Heart left ventricle (tissue), 16 donors: ENCODE measurements at regions of chr3 and their contacts with region 1.

Region 1: GRCh38 chr3:4350789-4351163 is 47.6 kb downstream of the SETMAR start:
- DNase-seq: peak in 3 of 5 donors; percentile 33 to 48 (median 45)
- ATAC-seq: peak; percentile 55 to 90 (median 84)
- H3K4me3 ChIP-seq: peak overlapping the region in 9 of 12 donors; percentile 19 to 55 (median 45)
- H3K27ac ChIP-seq: peak overlapping the region in 10 of 12 donors; percentile 2 to 76 (median 60)
- H3K4me1 ChIP-seq: peaks cover 0 to 20% (median 8%) of the 10 kb centered on the region in 12 donors
- H3K27me3 ChIP-seq: no peaks in the 10 kb centered on the region
- CTCF ChIP-seq: peak; percentile 62 to 88 (median 78)
- POLR2A ChIP-seq: no peak

Region 2: GRCh38 chr3:4493014-4493940 is 142.5 kb after region 1 on chr3 and contains the start of gene ITPR1:
- intact Hi-C with region 1: loop called in 3 of 10 experiments (anchors 10 kb)
- DNase-seq: peak; percentile 98 to 99 (median 99)
- ATAC-seq: peak; percentile 98 to 99 (median 99)
- H3K4me3 ChIP-seq: peak within 1 kb of the TSS; percentile 59 to 96 (median 78)
- H3K27ac ChIP-seq: peak within 1 kb of the TSS; percentile 68 to 97 (median 87)
- H3K4me1 ChIP-seq: peaks cover 0 to 50% (median 26%) of the 10 kb centered on the region in 12 donors
- H3K27me3 ChIP-seq: no peaks in the 10 kb centered on the region
- CTCF ChIP-seq: no peak
- POLR2A ChIP-seq: peak; percentile 90 to 99
- total RNA-seq, gene ITPR1: 16.5 to 55.8 (median 20.1) TPM

Region 3: DNA sequence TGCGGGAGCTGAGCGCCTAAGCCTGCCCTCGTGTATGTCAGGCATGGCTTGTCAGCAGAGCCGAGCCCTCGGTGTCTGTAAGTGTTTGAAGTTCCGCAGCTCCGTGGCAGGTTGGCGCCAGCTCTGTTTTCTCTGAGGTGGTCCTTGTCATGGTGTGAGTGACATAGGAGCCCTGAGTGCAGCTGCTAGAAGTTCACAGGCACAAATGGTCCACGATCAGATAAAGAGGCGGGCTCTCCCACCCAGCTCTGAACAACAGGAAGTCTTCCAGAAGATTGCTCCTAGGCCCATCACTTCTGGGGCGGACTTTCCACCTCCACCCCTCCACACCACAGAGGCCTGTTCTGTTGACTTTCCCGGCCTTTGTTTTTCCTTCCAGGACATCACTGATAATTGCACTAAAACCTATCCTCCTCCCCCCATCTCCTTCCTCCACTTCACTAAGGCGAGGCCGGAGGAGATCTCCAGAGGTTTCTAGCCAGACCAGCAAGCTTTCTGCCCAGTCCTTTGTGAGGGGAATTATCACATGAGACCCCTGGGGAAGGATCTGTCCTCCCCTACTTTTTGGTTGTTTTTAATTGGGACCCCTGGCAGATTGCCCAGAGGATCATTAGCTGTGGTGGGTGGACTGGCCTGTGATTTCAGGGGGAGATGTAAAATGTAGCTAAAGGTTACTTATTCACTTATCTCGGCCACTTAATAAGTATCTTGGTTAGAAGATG is 162.3 kb after region 1 on chr3:
- intact Hi-C with region 1: loop called in 1 of 10 experiments (anchors 10 kb)
- DNase-seq: peak in 3 of 5 donors; percentile 33 to 61 (median 40)
- ATAC-seq: peak; percentile 49 to 75 (median 67)
- H3K4me3 ChIP-seq: no peak overlapping the region
- H3K27ac ChIP-seq: peak overlapping the region in 9 of 12 donors; percentile 18 to 54 (median 39)
- H3K4me1 ChIP-seq: peaks cover 0 to 66% (median 32%) of the 10 kb centered on the region in 12 donors
- H3K27me3 ChIP-seq: no peaks in the 10 kb centered on the region
- CTCF ChIP-seq: no peak
- POLR2A ChIP-seq: no peak

Region 4: DNA sequence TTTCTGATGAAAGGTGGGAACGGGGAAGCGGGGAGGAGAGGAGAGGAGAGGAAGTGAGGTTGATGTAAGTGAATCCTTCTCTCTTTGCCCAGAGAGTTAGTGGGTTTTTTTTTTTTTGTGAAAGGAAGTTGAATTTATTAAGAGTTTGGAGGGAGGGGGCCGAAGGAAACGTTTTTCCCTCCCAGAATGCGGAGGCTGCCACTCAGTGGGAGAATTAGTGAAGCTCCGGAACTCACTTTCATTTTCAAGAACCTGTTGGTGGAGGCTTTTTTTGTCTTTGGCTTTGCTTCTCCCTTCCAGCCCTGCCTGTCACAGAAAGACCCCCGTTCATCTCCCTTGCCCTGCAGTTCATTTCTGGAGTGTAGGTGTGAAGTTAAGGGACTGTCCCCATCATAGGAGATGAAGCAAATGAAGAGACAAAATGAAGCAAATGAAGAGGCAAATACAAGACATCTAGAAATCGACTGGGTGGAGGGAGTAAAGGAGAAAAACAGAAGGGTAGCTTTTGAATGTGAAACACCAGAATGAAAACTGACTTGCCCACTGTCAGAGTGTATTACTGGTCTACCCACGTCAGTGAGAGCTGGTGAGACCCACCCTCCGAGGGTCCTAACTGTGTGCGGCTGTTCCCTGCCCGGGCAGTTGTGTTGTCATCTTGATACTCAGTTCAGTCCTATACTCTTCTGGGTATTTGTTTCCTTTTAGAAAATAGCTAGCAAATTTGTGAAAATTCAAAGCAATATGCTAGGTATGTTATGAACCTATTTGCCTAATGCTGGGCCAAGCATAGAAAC is 233.9 kb after region 1 on chr3:
- intact Hi-C with region 1: loop called in 4 of 10 experiments (anchors 2 to 5 kb)
- DNase-seq: peak in 3 of 5 donors; percentile 31 to 49 (median 46)
- ATAC-seq: peak in 2 of 4 donors; percentile 10 to 36
- H3K4me3 ChIP-seq: peak overlapping the region in 11 of 12 donors; percentile 7 to 45 (median 33)
- H3K27ac ChIP-seq: peak overlapping the region; percentile 40 to 84 (median 77)
- H3K4me1 ChIP-seq: peaks cover 0 to 83% (median 67%) of the 10 kb centered on the region in 12 donors
- H3K27me3 ChIP-seq: no peaks in the 10 kb centered on the region
- CTCF ChIP-seq: peak in 10 of 12 donors; percentile 5 to 56 (median 38)
- POLR2A ChIP-seq: no peak

Region 5: GRCh38 chr3:4633078-4634004 is 282.6 kb after region 1 on chr3:
- intact Hi-C with region 1: loop called (anchors 1 to 2 kb)
- DNase-seq: no peak
- ATAC-seq: peak in 3 of 4 donors; percentile 74 to 81 (median 78)
- H3K4me3 ChIP-seq: no peak overlapping the region
- H3K27ac ChIP-seq: no peak overlapping the region
- H3K4me1 ChIP-seq: peaks cover 0 to 6% (median 0%) of the 10 kb centered on the region in 12 donors
- H3K27me3 ChIP-seq: no peaks in the 10 kb centered on the region
- CTCF ChIP-seq: peak; percentile 80 to 91 (median 84)
- POLR2A ChIP-seq: no peak

Region 6: GRCh38 chr3:4776980-4777581 is 426.3 kb after region 1 on chr3:
- intact Hi-C with region 1: no loop called
- DNase-seq: no peak
- ATAC-seq: peak in 3 of 4 donors; percentile 47 to 57 (median 48)
- H3K4me3 ChIP-seq: no peak overlapping the region
- H3K27ac ChIP-seq: peak overlapping the region in 9 of 12 donors; percentile 18 to 47 (median 34)
- H3K4me1 ChIP-seq: peaks cover 4 to 49% (median 26%) of the 10 kb centered on the region in 12 donors
- H3K27me3 ChIP-seq: no peaks in the 10 kb centered on the region
- CTCF ChIP-seq: no peak
- POLR2A ChIP-seq: no peak

Region 7: DNA sequence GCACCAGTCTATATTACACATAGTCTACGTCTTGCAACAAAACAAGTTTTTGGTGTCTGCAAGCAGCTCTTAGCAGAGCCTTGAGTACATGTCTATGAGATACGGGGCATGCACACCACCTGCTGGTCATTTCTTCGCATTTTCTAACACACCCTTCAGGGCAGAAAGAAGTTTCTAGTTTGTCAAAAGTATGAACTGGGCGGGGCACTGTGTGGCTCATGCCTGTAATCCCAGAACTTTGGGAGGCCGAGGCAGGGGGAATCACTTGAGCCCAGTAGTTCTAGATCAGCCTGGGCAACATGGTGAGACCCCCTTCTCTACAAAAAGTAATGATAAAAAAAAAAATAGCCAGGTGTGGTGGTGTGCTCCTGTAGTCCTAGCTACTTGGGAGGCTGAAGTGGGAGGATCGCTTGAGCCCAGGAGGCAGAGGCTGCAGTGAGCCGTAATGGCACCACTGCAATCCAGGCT is 707.1 kb after region 1 on chr3:
- intact Hi-C with region 1: loop called in 1 of 10 experiments (anchors 10 kb)
- DNase-seq: peak in 4 of 5 donors; percentile 72 to 76 (median 73)
- ATAC-seq: peak; percentile 77 to 91 (median 89)
- H3K4me3 ChIP-seq: no peak overlapping the region
- H3K27ac ChIP-seq: peak overlapping the region in 2 of 12 donors; percentile 10 to 23
- H3K4me1 ChIP-seq: peaks cover 0 to 49% (median 8%) of the 10 kb centered on the region in 12 donors
- H3K27me3 ChIP-seq: no peaks in the 10 kb centered on the region
- CTCF ChIP-seq: peak; percentile 61 to 84 (median 77)
- POLR2A ChIP-seq: no peak